ENCODE measurements at regions of chr17 and their contacts with region 1.

Region 1: DNA sequence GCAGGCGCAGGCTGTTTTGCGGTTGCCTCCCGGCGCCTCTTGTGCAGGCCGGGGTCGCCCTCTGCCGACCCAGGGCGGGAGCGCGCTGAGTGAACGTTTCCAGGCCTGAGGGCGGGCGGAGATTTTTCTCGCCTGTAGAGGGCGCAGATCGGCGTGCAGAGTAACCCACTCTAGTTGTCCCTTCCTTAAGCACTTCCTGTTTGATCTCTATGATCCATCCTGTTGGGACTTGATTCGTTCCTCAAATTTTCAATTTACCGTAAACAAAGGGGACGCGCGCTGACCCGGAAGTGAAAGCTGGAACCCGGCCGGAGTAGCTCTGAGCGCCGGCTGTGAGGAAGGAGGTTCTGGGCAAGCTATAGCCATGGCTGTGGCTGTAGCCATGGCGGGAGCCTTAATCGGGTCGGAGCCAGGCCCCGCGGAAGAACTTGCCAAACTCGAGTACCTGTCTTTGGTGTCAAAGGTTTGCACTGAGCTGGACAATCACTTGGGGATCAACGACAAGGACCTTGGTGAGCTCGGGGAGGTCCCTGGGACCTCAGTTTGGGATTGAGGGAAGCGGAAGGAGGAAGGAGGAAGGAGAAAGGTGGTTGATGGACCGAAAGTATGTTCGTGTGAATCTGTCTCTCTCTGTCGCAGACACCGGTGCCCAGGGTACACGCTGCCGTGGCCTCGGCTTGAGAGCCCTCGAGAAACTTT is at the start of gene DHX8:
- DNase-seq: peak; percentile 97 to 99 (median 97)
- ATAC-seq: peak; percentile 99
- H3K4me3 ChIP-seq: peak within 1 kb of the TSS; percentile 58 to 91 (median 77)
- H3K27ac ChIP-seq: peak within 1 kb of the TSS; percentile 54 to 93 (median 82)
- H3K4me1 ChIP-seq: peaks cover 0 to 41% (median 28%) of the 10 kb centered on the region in 12 donors
- H3K27me3 ChIP-seq: no peaks in the 10 kb centered on the region
- CTCF ChIP-seq: peak; percentile 100
- POLR2A ChIP-seq: peak in 1 of 2 donors; percentile 80
- total RNA-seq, gene DHX8: 22.7 to 41.0 (median 28.1) TPM

Region 2: DNA sequence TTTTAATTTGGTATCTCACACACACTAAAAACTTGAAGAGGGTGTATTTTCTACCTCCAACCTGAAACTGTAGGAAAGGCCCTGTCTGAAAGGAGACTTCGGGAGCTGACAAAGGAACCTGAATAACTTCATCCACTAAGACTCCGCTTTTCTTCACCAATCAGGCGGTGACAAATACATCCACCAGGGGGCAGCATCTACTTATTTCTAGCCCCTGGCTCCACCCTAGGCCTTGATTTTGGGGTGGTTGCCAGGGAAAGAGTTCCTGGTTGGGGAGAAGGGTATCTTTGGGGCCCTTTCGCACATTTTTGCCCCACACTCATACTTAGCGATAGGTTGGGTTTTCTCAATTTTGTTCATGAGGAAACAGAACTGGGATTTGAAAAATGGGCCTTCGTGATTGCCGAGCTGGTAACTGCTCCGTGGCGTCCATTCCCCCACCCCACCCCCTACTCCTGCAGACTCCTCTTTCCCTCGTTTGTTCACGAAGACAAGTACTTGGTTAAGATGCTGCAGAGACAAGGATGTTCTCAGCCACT is 89.8 kb before region 1 on chr17:
- intact Hi-C with region 1: loop called (anchors 1 to 2 kb)
- DNase-seq: peak; percentile 79 to 91 (median 89)
- ATAC-seq: peak; percentile 45 to 64 (median 60)
- H3K4me3 ChIP-seq: peak overlapping the region in 8 of 12 donors; percentile 4 to 31 (median 24)
- H3K27ac ChIP-seq: peak overlapping the region in 8 of 12 donors; percentile 19 to 79 (median 62)
- H3K4me1 ChIP-seq: peaks cover 0 to 34% (median 16%) of the 10 kb centered on the region in 12 donors
- H3K27me3 ChIP-seq: no peaks in the 10 kb centered on the region
- CTCF ChIP-seq: peak; percentile 88 to 97 (median 94)
- POLR2A ChIP-seq: no peak

Region 3: DNA sequence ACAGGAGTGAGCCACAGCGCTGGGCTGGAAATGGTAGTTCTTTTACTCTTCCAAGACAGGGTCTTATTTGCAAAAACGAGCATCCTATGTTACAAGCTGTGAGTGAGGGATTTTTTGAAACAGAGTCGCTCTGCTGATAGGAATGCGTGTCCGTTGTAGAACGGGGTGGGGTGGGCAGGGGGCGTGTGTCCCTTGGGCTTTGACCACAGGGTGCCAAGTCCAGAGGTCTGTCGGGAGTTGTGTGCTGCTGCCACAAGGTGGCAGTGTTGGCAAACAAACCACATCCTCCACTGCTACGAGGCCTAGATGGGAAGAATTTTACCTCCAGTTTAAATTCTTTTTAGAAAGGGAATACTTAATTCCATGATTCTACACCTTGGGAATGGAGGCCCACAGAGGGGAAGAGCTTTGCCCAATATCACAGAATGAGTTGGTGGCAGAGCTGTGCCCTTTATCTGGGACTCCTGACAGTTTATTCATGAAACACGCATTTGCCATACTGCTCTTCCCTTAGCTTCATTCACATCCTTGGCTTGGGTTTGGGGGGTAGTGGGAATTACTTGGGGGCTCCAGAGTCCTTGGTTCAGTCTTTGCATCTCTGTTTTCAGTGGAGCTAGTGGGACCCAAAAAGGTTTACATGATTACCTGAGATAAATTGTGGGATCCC is 92.9 kb after region 1 on chr17:
- intact Hi-C with region 1: no loop called
- DNase-seq: peak; percentile 62 to 79 (median 68)
- ATAC-seq: peak; percentile 75 to 85 (median 79)
- H3K4me3 ChIP-seq: no peak overlapping the region
- H3K27ac ChIP-seq: peak overlapping the region in 2 of 12 donors; percentile 70 to 75
- H3K4me1 ChIP-seq: peaks cover 0 to 52% (median 37%) of the 10 kb centered on the region in 12 donors
- H3K27me3 ChIP-seq: no peaks in the 10 kb centered on the region
- CTCF ChIP-seq: peak; percentile 88 to 99 (median 92)
- POLR2A ChIP-seq: no peak